ENCODE measurements at regions of chr17 and their contacts with region 1.

Region 1: DNA sequence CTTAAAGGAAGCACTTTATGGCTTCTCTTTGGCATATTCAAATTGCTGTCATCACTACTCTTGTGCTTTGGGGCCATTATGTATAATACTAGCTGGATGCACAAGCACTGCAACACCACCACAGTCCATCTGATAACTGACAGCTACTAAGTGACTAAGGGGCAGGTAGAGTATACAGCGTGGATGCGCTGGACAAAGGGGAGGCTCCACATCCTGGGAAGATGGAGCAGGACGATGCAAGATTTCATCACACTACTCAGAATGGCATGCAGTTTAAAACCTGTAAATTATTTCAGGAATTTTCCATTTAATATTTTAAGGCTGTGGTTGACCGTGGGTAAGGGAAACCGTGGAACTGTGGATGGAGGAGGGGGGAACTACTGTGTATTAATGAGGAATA is 25.0 kb downstream of the MPRIP start:
- DNase-seq: no peak
- ATAC-seq: no peak
- H3K4me3 ChIP-seq: no peak overlapping the region
- H3K27ac ChIP-seq: no peak overlapping the region
- H3K4me1 ChIP-seq: peaks cover 49% of the 10 kb centered on the region
- H3K27me3 ChIP-seq: no peaks in the 10 kb centered on the region
- CTCF ChIP-seq: no peak

Region 2: GRCh38 chr17:16991349-16992009 is 75.8 kb before region 1 on chr17:
- CTCF ChIA-PET with region 1: no interaction called
- POLR2A ChIA-PET with region 1: no interaction called
- intact Hi-C with region 1: no loop called
- DNase-seq: peak; percentile 89
- ATAC-seq: peak; percentile 84
- H3K4me3 ChIP-seq: no peak overlapping the region
- H3K27ac ChIP-seq: no peak overlapping the region
- H3K4me1 ChIP-seq: peaks cover 3% of the 10 kb centered on the region; the same call in 1 of the 2 replicates
- H3K27me3 ChIP-seq: no peaks in the 10 kb centered on the region
- CTCF ChIP-seq: peak; percentile 97

Region 3: GRCh38 chr17:17164676-17165075 is 97.4 kb after region 1 on chr17:
- CTCF ChIA-PET with region 1: no interaction called
- POLR2A ChIA-PET with region 1: interaction called, 15 read pairs
- intact Hi-C with region 1: no loop called
- DNase-seq: no peak
- ATAC-seq: no peak
- H3K4me3 ChIP-seq: no peak overlapping the region
- H3K27ac ChIP-seq: no peak overlapping the region
- H3K4me1 ChIP-seq: no peaks in the 10 kb centered on the region
- H3K27me3 ChIP-seq: no peaks in the 10 kb centered on the region
- CTCF ChIP-seq: no peak